ENCODE measurements at regions of chr19 and their contacts with region 1.

Region 1: GRCh38 chr19:48970923-48971395 is 5.8 kb downstream of the FTL start:
- DNase-seq: peak; percentile 91
- ATAC-seq: peak; percentile 89
- H3K4me3 ChIP-seq: no peak overlapping the region
- H3K4me3 Mint-ChIP-seq: no peak overlapping the region
- H3K27ac ChIP-seq: no peak overlapping the region
- H3K27ac Mint-ChIP-seq: peak overlapping the region; percentile 63
- H3K4me1 ChIP-seq: peaks cover 12 to 29% of the 10 kb centered on the region in 2 donors
- H3K4me1 Mint-ChIP-seq: peaks cover 34% of the 10 kb centered on the region
- H3K27me3 ChIP-seq: no peaks in the 10 kb centered on the region
- H3K27me3 Mint-ChIP-seq: no peaks in the 10 kb centered on the region
- CTCF ChIP-seq: peak; percentile 93

Region 2: DNA sequence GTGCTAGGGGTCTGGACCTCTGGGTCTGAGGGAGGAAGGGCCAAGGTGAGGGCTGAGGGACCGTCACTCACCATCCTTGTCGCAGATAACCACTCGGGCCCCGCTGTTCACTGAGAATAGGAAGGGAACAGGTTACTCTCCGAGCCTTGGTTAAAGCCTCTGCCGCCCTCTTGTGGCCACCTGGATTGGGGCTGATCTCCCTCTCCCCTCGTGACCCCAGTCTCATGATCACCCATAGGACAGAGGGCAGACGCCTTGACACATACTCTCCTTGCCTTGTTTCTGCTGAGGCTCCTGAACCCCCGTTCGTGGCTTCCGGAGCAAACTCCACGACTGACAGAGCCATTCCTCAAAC is 135.2 kb before region 1 on chr19:
- CTCF ChIA-PET with region 1: interaction called, 29 read pairs
- POLR2A ChIA-PET with region 1: no interaction called
- intact Hi-C with region 1: loop called (anchors 1 kb)
- DNase-seq: peak; percentile 96
- ATAC-seq: peak; percentile 87
- H3K4me3 ChIP-seq: peak overlapping the region in 4 of 5 experiments; percentile 25 to 59 (median 54)
- H3K4me3 Mint-ChIP-seq: peak overlapping the region; percentile 98
- H3K27ac ChIP-seq: peak overlapping the region in 1 of 2 donors; percentile 56
- H3K27ac Mint-ChIP-seq: peak overlapping the region; percentile 93
- H3K4me1 ChIP-seq: peaks cover 16 to 25% of the 10 kb centered on the region in 2 donors
- H3K4me1 Mint-ChIP-seq: peaks cover 25% of the 10 kb centered on the region
- H3K27me3 ChIP-seq: peaks cover 0 to 13% (median 1%) of the 10 kb centered on the region in 4 experiments
- H3K27me3 Mint-ChIP-seq: no peaks in the 10 kb centered on the region
- CTCF ChIP-seq: peak; percentile 82

Region 3: GRCh38 chr19:48872182-48872883 is 98.6 kb before region 1 on chr19 and contains the start of gene PPP1R15A:
- CTCF ChIA-PET with region 1: interaction called, 30 read pairs
- POLR2A ChIA-PET with region 1: interaction called, 7 read pairs
- intact Hi-C with region 1: no loop called
- DNase-seq: peak; percentile 99
- ATAC-seq: peak; percentile 53
- H3K4me3 ChIP-seq: peak within 1 kb of the TSS; percentile 70 to 100 (median 95)
- H3K4me3 Mint-ChIP-seq: peak within 1 kb of the TSS; percentile 98
- H3K27ac ChIP-seq: peak within 1 kb of the TSS; percentile 96 to 100
- H3K27ac Mint-ChIP-seq: peak within 1 kb of the TSS; percentile 100
- H3K4me1 ChIP-seq: peaks cover 30 to 48% of the 10 kb centered on the region in 2 donors
- H3K4me1 Mint-ChIP-seq: peaks cover 40% of the 10 kb centered on the region
- H3K27me3 ChIP-seq: peaks cover 0 to 2% (median 0%) of the 10 kb centered on the region in 4 experiments
- H3K27me3 Mint-ChIP-seq: peaks cover 5% of the 10 kb centered on the region
- CTCF ChIP-seq: no peak
- total RNA-seq, gene PPP1R15A: 122 and 128 TPM in 2 replicates

Region 4: GRCh38 chr19:48933382-48933932 is 37.5 kb before region 1 on chr19 and contains the start of gene DHDH:
- CTCF ChIA-PET with region 1: interaction called, 18 read pairs
- POLR2A ChIA-PET with region 1: no interaction called
- intact Hi-C with region 1: loop called (anchors 1 kb)
- DNase-seq: peak; percentile 87
- ATAC-seq: peak; percentile 98
- H3K4me3 ChIP-seq: peak within 1 kb of the TSS; percentile 32 to 67 (median 47)
- H3K4me3 Mint-ChIP-seq: peak within 1 kb of the TSS; percentile 91
- H3K27ac ChIP-seq: no peak within 1 kb of the TSS
- H3K27ac Mint-ChIP-seq: peak within 1 kb of the TSS; percentile 41
- H3K4me1 ChIP-seq: peaks cover 12 to 15% of the 10 kb centered on the region in 2 donors
- H3K4me1 Mint-ChIP-seq: peaks cover 11% of the 10 kb centered on the region
- H3K27me3 ChIP-seq: peaks cover 0 to 10% (median 3%) of the 10 kb centered on the region in 4 experiments
- H3K27me3 Mint-ChIP-seq: peaks cover 12% of the 10 kb centered on the region
- CTCF ChIP-seq: no peak
- total RNA-seq, gene DHDH: 0.64 TPM in 1 of 2 replicates, not detected in the other

Region 5: DNA sequence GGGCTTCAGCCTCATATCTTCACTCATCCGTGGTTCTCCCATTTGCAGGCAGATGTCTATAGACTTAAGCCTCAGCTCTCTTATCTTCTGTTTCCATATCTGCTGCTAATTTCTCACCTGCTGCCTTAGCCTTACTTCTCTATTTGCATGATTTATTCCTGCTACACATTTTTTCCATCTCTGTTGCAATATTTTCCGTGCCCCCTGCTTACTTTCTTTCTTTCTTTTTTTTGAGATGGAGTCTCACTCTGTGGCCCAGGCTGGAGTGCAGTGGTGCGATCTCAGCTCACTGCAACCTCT is 16.4 kb after region 1 on chr19:
- CTCF ChIA-PET with region 1: interaction called, 17 read pairs
- POLR2A ChIA-PET with region 1: interaction called, 4 read pairs
- intact Hi-C with region 1: no loop called
- DNase-seq: no peak
- ATAC-seq: no peak
- H3K4me3 ChIP-seq: no peak overlapping the region
- H3K4me3 Mint-ChIP-seq: no peak overlapping the region
- H3K27ac ChIP-seq: no peak overlapping the region
- H3K27ac Mint-ChIP-seq: no peak overlapping the region
- H3K4me1 ChIP-seq: peaks cover 6 to 12% of the 10 kb centered on the region in 2 donors
- H3K4me1 Mint-ChIP-seq: peaks cover 16% of the 10 kb centered on the region
- H3K27me3 ChIP-seq: no peaks in the 10 kb centered on the region
- H3K27me3 Mint-ChIP-seq: no peaks in the 10 kb centered on the region
- CTCF ChIP-seq: no peak

Region 6: DNA sequence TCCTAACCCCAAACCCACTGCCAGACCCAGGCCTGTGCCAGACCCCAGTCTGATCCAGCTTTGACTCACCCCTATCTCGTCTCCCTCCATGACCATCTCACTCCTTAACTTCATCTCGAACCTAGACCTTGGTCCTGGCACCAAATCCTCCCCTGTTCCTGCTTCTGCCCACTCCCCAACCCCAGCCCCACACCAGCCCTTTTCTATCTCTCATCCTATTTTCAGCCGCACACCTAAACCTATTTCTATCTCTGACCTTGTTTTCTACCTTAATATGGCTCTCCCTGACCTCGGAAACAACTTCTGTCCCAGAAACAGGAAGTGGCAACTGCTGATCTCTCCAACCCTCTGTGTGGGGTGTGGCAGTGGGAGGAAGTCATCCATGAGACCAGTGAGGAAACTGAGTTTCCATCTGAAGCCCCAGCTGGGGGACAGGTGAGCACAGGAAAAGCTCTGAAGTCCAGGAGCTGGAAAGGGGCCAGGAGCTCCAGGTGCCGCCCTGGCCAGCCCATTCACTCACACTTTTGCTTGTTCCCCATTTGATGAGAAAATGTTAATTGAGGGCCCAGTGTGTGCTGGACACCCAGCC is 438.6 kb after region 1 on chr19:
- CTCF ChIA-PET with region 1: no interaction called
- POLR2A ChIA-PET with region 1: no interaction called
- intact Hi-C with region 1: no loop called
- DNase-seq: peak; percentile 71
- ATAC-seq: peak; percentile 85
- H3K4me3 ChIP-seq: peak overlapping the region in 1 of 5 experiments; percentile 45
- H3K4me3 Mint-ChIP-seq: peak overlapping the region; percentile 52
- H3K27ac ChIP-seq: peak overlapping the region; percentile 50 to 55
- H3K27ac Mint-ChIP-seq: peak overlapping the region; percentile 60
- H3K4me1 ChIP-seq: peaks cover 34 to 46% of the 10 kb centered on the region in 2 donors
- H3K4me1 Mint-ChIP-seq: peaks cover 46% of the 10 kb centered on the region
- H3K27me3 ChIP-seq: no peaks in the 10 kb centered on the region
- H3K27me3 Mint-ChIP-seq: no peaks in the 10 kb centered on the region
- CTCF ChIP-seq: no peak

Measured in B cell (primary cell).